Spleen (tissue), 13 donors: ENCODE measurements at regions of chr12 and their contacts with region 1.

Region 1: GRCh38 chr12:106386813-106387535 is 29.4 kb downstream of the POLR3B start:
- DNase-seq: no peak
- H3K4me3 ChIP-seq: no peak overlapping the region
- H3K27ac ChIP-seq: no peak overlapping the region
- H3K4me1 ChIP-seq: peaks cover 0 to 3% (median 0%) of the 10 kb centered on the region in 6 donors
- H3K27me3 ChIP-seq: no peaks in the 10 kb centered on the region
- CTCF ChIP-seq: no peak
- POLR2A ChIP-seq: no peak

Region 2: GRCh38 chr12:106841510-106842302 is 454.7 kb after region 1 on chr12:
- intact Hi-C with region 1: loop called (anchors 5 kb)
- DNase-seq: no peak
- H3K4me3 ChIP-seq: no peak overlapping the region
- H3K27ac ChIP-seq: peak overlapping the region in 2 of 8 donors; percentile 39 to 43
- H3K4me1 ChIP-seq: peaks cover 0 to 29% (median 14%) of the 10 kb centered on the region in 6 donors
- H3K27me3 ChIP-seq: no peaks in the 10 kb centered on the region
- CTCF ChIP-seq: peak in 9 of 11 experiments; percentile 13 to 61 (median 46)
- POLR2A ChIP-seq: no peak

Region 3: GRCh38 chr12:106919910-106920544 is 533.1 kb after region 1 on chr12:
- intact Hi-C with region 1: loop called (anchors 5 kb)
- DNase-seq: no peak
- H3K4me3 ChIP-seq: no peak overlapping the region
- H3K27ac ChIP-seq: no peak overlapping the region
- H3K4me1 ChIP-seq: peaks cover 0 to 28% (median 5%) of the 10 kb centered on the region in 6 donors
- H3K27me3 ChIP-seq: peaks cover 0 to 99% (median 5%) of the 10 kb centered on the region in 7 donors
- CTCF ChIP-seq: peak in 10 of 11 experiments; percentile 24 to 79 (median 64)
- POLR2A ChIP-seq: no peak

Region 4: GRCh38 chr12:107109741-107110719 is 723.1 kb after region 1 on chr12:
- intact Hi-C with region 1: loop called (anchors 10 kb)
- DNase-seq: no peak
- H3K4me3 ChIP-seq: no peak overlapping the region
- H3K27ac ChIP-seq: no peak overlapping the region
- H3K4me1 ChIP-seq: no peaks in the 10 kb centered on the region
- H3K27me3 ChIP-seq: peaks cover 0 to 23% (median 0%) of the 10 kb centered on the region in 7 donors
- CTCF ChIP-seq: no peak
- POLR2A ChIP-seq: no peak